HAP-1 (cell line): ENCODE measurements at regions of chr3 and their contacts with region 1.

Region 1: DNA sequence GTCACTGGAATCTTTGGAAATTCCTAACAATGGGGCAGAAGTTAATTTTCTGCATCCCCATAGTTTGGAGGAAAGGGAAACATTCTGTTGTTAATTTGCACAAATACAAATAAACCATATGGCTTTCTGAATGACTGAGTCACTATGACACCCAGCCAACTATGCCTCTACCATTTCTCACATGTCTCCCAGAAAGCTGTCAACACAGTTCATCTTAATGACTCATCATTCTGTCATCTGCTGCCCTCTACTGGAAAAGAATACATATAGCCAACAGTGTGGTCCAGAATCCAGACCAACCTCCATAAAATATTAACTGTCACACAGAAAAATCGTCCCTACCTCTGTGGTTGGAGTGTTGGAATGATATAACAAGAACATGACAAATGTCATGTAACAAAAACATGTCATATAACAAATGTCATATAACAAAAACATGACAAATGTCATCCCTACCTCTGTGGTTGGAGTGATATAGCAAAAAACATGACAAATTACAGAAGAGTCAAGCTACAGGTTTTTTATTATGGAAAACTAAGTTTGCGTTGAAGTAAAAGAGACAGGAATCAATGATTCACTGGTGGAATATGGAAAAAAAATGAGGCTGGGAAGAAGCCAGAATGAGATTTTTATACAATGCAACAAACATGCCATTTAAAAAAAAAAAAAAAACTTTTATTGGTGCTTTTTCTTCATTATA is 47.7 kb upstream of the GYG1 start:
- DNase-seq: peak; percentile 22 to 83
- H3K4me3 ChIP-seq: no peak overlapping the region
- H3K4me1 ChIP-seq: no peaks in the 10 kb centered on the region
- H3K27me3 ChIP-seq: peaks cover 9% of the 10 kb centered on the region

Region 2: GRCh38 chr3:148379763-148380382 is 563.8 kb before region 1 on chr3:
- in situ Hi-C with region 1: loop called (anchors 25 kb)
- DNase-seq: peak in 1 of 2 experiments; percentile 22
- H3K4me3 ChIP-seq: no peak overlapping the region
- H3K4me1 ChIP-seq: no peaks in the 10 kb centered on the region
- H3K27me3 ChIP-seq: no peaks in the 10 kb centered on the region

Region 3: DNA sequence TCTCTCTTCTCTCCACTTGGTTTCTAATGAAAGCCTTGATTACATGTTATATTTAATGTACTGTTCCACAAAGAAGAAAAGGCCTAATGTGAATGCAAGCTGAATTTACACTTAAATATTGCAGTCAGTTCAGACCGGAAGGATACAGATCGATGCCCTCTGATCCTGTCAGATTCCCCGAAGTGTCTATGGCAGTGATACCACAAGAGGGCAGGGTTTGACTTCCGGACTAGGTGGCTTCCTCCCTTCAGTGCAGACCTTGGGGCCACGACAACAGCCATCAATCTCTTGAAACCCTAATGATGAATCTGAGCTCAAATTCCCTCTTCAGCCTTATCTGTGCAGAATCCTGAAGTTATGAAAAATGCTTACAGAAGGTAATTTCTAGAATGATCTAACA is 216.4 kb before region 1 on chr3:
- in situ Hi-C with region 1: loop called (anchors 10 kb)
- DNase-seq: peak; percentile 64 to 78
- H3K4me3 ChIP-seq: no peak overlapping the region
- H3K4me1 ChIP-seq: no peaks in the 10 kb centered on the region; the same call in 1 of the 2 replicates
- H3K27me3 ChIP-seq: peaks cover 22% of the 10 kb centered on the region; the same call in 1 of the 2 replicates

Region 4: GRCh38 chr3:149216193-149216869 is 272.7 kb after region 1 on chr3:
- in situ Hi-C with region 1: no loop called
- DNase-seq: no peak
- H3K4me3 ChIP-seq: no peak overlapping the region
- H3K4me1 ChIP-seq: peaks cover 14% of the 10 kb centered on the region
- H3K27me3 ChIP-seq: no peaks in the 10 kb centered on the region